HepG2 (cell line): ENCODE measurements at regions of chr19 and their contacts with region 1.

Region 1: GRCh38 chr19:54189735-54190502 is 539 bp upstream of the MBOAT7 start:
- DNase-seq: peak; percentile 100
- ATAC-seq: peak; percentile 66
- H3K4me3 ChIP-seq: peak overlapping the region; percentile 73 to 88 (median 74)
- H3K27ac ChIP-seq: peak overlapping the region; percentile 96
- H3K4me1 ChIP-seq: peaks cover 40% of the 10 kb centered on the region
- H3K27me3 ChIP-seq: no peaks in the 10 kb centered on the region
- CTCF ChIP-seq: no peak
- EP300 ChIP-seq: no peak
- POLR2A ChIP-seq: peak; percentile 81 to 84
- RAD21 ChIP-seq: no peak

Region 2: GRCh38 chr19:54115109-54116063 is 74.5 kb before region 1 on chr19 and contains the starts of genes PRPF31 and TFPT:
- CTCF ChIA-PET with region 1: no interaction called
- POLR2A ChIA-PET with region 1: interaction called, 17 read pairs
- in situ Hi-C with region 1: no loop called
- intact Hi-C with region 1: no loop called
- DNase-seq: peak; percentile 96
- ATAC-seq: peak; percentile 97
- H3K4me3 ChIP-seq: peak within 1 kb of the TSS; percentile 77 to 91 (median 82)
- H3K27ac ChIP-seq: peak within 1 kb of the TSS; percentile 88
- H3K4me1 ChIP-seq: peaks cover 21% of the 10 kb centered on the region
- H3K27me3 ChIP-seq: no peaks in the 10 kb centered on the region; a peak in 1 of 5 replicates
- CTCF ChIP-seq: no peak
- EP300 ChIP-seq: no peak
- POLR2A ChIP-seq: peak; percentile 75 to 87
- RAD21 ChIP-seq: no peak
- total RNA-seq, gene PRPF31: 63.8 and 68.9 TPM in 2 replicates
- total RNA-seq, gene TFPT: 10.7 and 13.5 TPM in 2 replicates

Region 3: DNA sequence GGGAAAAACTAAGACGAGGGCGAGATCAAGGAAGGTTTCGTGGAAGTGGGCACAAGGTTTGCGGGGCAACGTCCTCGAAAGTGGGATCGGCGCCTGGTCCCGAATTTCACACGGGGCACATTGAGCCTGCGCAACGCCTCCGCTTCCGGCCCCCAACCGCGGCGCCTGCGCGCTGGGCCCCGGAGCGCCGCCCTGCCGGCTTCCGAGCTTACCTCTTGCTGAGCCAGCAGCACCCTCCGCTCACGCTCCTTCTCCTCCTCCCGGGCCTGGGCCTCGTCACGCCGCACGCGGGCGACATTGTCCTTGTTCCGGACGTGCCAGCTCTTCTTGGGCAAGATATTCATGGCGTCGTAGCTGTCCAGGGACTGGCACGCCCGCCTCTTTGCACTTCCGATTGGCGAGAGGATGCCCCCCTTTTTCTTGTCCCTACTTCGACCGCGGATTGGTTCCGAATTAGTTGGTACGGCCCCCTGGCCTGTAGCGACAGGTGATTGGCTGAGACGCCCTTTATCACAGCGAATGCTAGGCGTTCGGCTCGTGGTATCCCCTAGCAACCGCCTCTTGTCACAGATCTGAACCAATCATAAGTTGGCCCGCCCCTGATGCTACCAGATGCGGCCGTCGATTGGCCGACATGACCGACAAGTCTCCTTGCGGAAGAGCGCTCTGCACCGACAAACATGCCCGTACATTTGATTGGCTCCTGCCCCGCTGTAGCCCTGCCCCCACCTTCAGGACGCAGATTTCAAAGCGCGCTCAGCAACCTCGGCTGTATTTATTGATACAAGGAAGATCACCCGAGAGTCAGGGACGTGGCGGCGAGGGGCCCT is 30.4 kb before region 1 on chr19 and contains the start of gene LENG1:
- CTCF ChIA-PET with region 1: no interaction called
- POLR2A ChIA-PET with region 1: interaction called, 18 read pairs
- in situ Hi-C with region 1: no loop called
- intact Hi-C with region 1: loop called (anchors 1 kb)
- DNase-seq: peak; percentile 100
- ATAC-seq: peak; percentile 94
- H3K4me3 ChIP-seq: peak within 1 kb of the TSS; percentile 75 to 93 (median 80)
- H3K27ac ChIP-seq: peak within 1 kb of the TSS; percentile 90
- H3K4me1 ChIP-seq: peaks cover 13% of the 10 kb centered on the region
- H3K27me3 ChIP-seq: no peaks in the 10 kb centered on the region; a peak in 1 of 5 replicates
- CTCF ChIP-seq: peak; percentile 68
- EP300 ChIP-seq: no peak; a peak in 1 of 4 replicates
- POLR2A ChIP-seq: peak; percentile 47 to 62; a peak in 2 of 4 replicates
- RAD21 ChIP-seq: 0 out of 2 replicates have a peak, but pooled peaks have one; percentile 35
- total RNA-seq, gene LENG1: 3.8 and 4.0 TPM in 2 replicates

Region 4: GRCh38 chr19:54203151-54203611 is 13.3 kb after region 1 on chr19:
- CTCF ChIA-PET with region 1: no interaction called
- POLR2A ChIA-PET with region 1: interaction called, 306 read pairs
- in situ Hi-C with region 1: no loop called
- intact Hi-C with region 1: no loop called
- DNase-seq: peak; percentile 82
- ATAC-seq: peak; percentile 32
- H3K4me3 ChIP-seq: peak overlapping the region; percentile 61 to 83 (median 72)
- H3K27ac ChIP-seq: peak overlapping the region; percentile 24
- H3K4me1 ChIP-seq: peaks cover 75% of the 10 kb centered on the region
- H3K27me3 ChIP-seq: no peaks in the 10 kb centered on the region; a peak in 1 of 5 replicates
- CTCF ChIP-seq: no peak
- EP300 ChIP-seq: no peak
- POLR2A ChIP-seq: peak in 1 of 2 experiments; percentile 19; a peak in 1 of 4 replicates
- RAD21 ChIP-seq: no peak

Region 5: GRCh38 chr19:54231077-54231931 is 41.4 kb after region 1 on chr19:
- CTCF ChIA-PET with region 1: interaction called, 7 read pairs
- POLR2A ChIA-PET with region 1: interaction called, 3 read pairs
- in situ Hi-C with region 1: no loop called
- intact Hi-C with region 1: loop called (anchors 5 kb)
- DNase-seq: peak; percentile 80
- ATAC-seq: peak; percentile 99
- H3K4me3 ChIP-seq: no peak overlapping the region; a peak in 1 of 6 replicates
- H3K27ac ChIP-seq: no peak overlapping the region
- H3K4me1 ChIP-seq: peaks cover 11% of the 10 kb centered on the region
- H3K27me3 ChIP-seq: peaks cover 1 to 13% of the 10 kb centered on the region in 2 experiments; a peak in 3 of 5 replicates
- CTCF ChIP-seq: peak; percentile 99
- EP300 ChIP-seq: no peak
- POLR2A ChIP-seq: no peak
- RAD21 ChIP-seq: peak; percentile 98